ENCODE measurements at regions of chr12 and their contacts with region 1.

Region 1: GRCh38 chr12:31659087-31659933 is at the start of gene ETFBKMT:
- DNase-seq: peak; percentile 92
- total RNA-seq, gene ETFBKMT: 5.7 TPM

Region 2: DNA sequence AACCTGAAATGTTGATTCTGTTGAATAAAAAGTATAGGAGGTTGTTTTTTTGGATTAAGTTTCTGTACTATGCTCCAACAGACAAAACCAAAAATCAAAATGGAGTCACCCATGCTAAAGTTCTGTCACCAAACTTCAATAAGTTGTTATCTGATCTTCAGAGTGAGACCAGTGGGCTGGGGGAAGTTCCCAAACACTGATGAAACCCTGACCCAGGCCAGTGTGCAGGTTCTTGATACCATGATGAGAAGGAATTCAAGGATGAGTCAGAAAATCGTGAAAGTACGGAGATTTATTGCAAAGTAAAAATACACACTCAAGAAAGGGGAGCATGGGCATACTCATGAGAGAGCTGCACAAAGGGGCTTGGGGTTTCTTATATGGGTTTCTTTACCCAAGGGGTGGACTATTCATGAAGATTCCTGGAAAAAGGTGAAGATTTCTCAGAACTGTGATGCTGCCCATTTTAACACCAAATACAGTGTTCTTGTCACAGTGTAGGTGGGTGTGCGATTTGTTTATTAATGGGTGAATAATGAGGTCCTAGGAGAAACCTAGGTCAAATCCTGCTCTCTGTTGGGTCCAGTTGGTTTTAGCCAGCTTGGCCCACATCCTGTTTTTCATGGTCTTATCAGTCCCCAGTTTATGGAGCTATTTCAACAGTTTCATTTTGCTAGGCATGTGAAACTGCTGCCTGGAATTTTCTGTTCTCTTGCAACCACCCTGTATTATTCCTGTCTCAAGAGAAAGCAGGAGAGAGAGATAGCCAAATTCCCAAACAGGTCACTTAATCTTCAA is 40.9 kb before region 1 on chr12:
- intact Hi-C with region 1: no loop called
- DNase-seq: no peak

Region 3: GRCh38 chr12:32679091-32679919 is 1020.0 kb after region 1 on chr12 and contains the start of gene DNM1L:
- intact Hi-C with region 1: loop called (anchors 10 kb)
- DNase-seq: peak; percentile 98
- total RNA-seq, gene DNM1L: 67.3 TPM

Measured in cardiac septum (tissue), 1 donor.